Lower leg skin (tissue), 4 donors: ENCODE measurements at regions of chr13 and their contacts with region 1.

Region 1: GRCh38 chr13:93080587-93080986 is 146.0 kb upstream of the GPC6 start:
- DNase-seq: no peak
- H3K4me3 ChIP-seq: no peak overlapping the region
- CTCF ChIP-seq: no peak
- POLR2A ChIP-seq: no peak

Region 2: DNA sequence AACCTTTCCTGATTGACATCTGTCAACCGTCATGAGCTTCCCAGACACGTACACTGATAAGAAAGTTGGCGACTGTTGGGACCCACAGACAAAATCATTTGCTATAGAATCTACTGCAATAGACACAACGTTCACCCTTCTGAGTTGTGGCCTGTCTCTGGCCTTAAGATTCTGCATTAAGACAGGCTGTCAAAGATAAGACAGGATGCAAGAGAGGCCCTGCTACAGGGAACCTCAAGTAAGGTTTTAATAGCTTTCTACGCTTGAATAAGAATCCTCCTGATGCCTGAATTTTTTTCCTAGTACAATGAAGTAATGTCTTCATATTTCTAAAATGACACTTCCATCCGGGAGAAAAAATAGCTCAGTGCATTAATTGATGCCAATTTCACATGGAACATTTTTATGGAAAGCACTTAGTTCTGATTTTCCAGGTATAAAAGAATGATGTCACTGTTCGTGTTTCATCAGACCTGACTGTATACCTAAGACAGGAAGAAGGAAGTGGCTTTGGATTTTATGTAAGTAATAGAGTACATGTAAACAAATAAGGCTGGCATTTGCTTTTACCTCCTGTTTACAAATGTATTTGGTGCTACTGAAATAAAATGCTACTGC is 129.2 kb before region 1 on chr13:
- intact Hi-C with region 1: no loop called
- DNase-seq: no peak
- H3K4me3 ChIP-seq: no peak overlapping the region
- CTCF ChIP-seq: no peak
- POLR2A ChIP-seq: no peak

Region 3: DNA sequence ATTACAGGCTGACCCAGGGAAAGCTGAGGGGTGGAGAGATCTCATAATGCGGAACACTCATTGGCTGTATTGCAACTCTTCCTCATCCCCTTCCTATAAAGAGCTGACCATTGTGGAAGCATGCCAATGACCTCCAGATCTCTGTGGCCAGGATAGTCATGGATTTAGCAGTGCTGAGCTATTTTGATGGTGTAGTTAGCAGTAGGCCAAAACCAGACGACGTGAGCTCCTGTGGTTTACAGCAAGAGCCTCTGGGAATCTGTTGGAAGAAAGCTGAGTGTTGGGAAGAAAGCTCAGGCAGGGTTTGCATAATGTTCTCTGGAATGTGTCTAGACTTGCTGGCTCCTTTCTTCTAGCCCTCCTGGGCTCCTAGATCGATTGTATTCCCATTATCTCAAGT is 41.5 kb before region 1 on chr13:
- intact Hi-C with region 1: no loop called
- DNase-seq: no peak
- H3K4me3 ChIP-seq: no peak overlapping the region
- CTCF ChIP-seq: no peak
- POLR2A ChIP-seq: no peak

Region 4: GRCh38 chr13:93055233-93055632 is 25.4 kb before region 1 on chr13:
- intact Hi-C with region 1: loop called (anchors 1 kb)
- DNase-seq: no peak
- H3K4me3 ChIP-seq: no peak overlapping the region
- CTCF ChIP-seq: no peak
- POLR2A ChIP-seq: no peak